ENCODE measurements at regions of chr11 and their contacts with region 1.

Region 1: GRCh38 chr11:46529095-46529905 is 64.5 kb downstream of the AMBRA1 start:
- DNase-seq: peak; percentile 55
- ATAC-seq: peak; percentile 97
- H3K4me3 ChIP-seq: no peak overlapping the region
- H3K27ac ChIP-seq: no peak overlapping the region
- H3K4me1 ChIP-seq: no peaks in the 10 kb centered on the region
- H3K27me3 ChIP-seq: no peaks in the 10 kb centered on the region
- CTCF ChIP-seq: peak; percentile 88
- POLR2A ChIP-seq: no peak
- RAD21 ChIP-seq: peak; percentile 75

Region 2: GRCh38 chr11:46389450-46390253 is 139.6 kb before region 1 on chr11:
- CTCF ChIA-PET with region 1: interaction called, 12 read pairs
- POLR2A ChIA-PET with region 1: no interaction called
- dilution Hi-C with region 1: no loop called
- in situ Hi-C with region 1: no loop called
- intact Hi-C with region 1: loop called (anchors 1 kb)
- DNase-seq: peak; percentile 46
- ATAC-seq: peak; percentile 69
- H3K4me3 ChIP-seq: peak overlapping the region; percentile 45
- H3K27ac ChIP-seq: no peak overlapping the region
- H3K4me1 ChIP-seq: peaks cover 8% of the 10 kb centered on the region; the same call in 1 of the 2 replicates
- H3K27me3 ChIP-seq: peaks cover 33% of the 10 kb centered on the region
- CTCF ChIP-seq: peak; percentile 91
- POLR2A ChIP-seq: no peak
- RAD21 ChIP-seq: peak; percentile 82

Region 3: GRCh38 chr11:46397526-46397925 is 131.8 kb before region 1 on chr11:
- CTCF ChIA-PET with region 1: interaction called, 7 read pairs
- POLR2A ChIA-PET with region 1: no interaction called
- dilution Hi-C with region 1: no loop called
- in situ Hi-C with region 1: loop called (anchors 5 kb)
- intact Hi-C with region 1: no loop called
- DNase-seq: no peak
- ATAC-seq: no peak
- H3K4me3 ChIP-seq: no peak overlapping the region
- H3K27ac ChIP-seq: no peak overlapping the region
- H3K4me1 ChIP-seq: no peaks in the 10 kb centered on the region
- H3K27me3 ChIP-seq: no peaks in the 10 kb centered on the region
- CTCF ChIP-seq: no peak
- POLR2A ChIP-seq: no peak
- RAD21 ChIP-seq: no peak

Region 4: DNA sequence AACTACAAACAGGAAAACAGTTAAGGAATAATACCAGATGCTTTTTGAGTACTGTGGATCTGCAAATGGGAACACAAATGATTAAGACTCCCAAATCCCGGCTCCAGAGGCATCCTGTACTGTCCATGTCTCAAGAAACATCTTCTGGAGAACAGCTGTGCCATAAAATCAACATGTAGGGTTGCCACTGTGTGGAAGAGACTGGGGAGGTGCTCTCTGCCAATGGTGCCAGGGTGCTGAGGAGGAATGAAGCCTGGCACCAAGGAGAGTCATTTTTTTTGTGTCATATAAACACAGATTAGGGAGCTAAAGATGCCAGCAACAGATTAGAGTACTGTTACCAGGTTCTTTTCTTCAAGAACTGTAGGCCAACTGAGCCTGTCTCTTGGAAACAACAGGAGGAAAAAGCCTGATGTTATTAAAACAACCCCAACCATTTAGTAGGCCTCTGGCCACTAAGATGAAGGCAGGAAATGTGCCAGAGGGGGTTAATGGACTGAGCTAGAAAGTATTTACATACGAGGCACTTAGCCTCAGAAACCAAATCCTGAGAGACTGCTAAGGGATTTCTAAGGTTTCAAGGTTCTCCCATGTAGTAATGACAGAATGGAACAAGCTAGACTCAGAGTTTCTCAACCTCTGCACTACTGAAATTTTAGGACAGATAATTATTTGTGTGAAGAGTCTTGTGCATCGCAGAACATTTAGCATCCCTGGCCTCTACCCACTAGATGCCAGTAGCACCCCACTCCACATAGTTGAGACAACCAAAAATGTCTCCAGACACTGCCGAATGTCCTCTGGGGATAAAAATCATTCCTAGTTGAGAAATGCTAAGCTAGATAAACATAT is 83.2 kb before region 1 on chr11:
- CTCF ChIA-PET with region 1: interaction called, 6 read pairs
- POLR2A ChIA-PET with region 1: no interaction called
- dilution Hi-C with region 1: no loop called
- in situ Hi-C with region 1: no loop called
- intact Hi-C with region 1: loop called (anchors 1 kb)
- DNase-seq: peak; percentile 52
- ATAC-seq: peak; percentile 72
- H3K4me3 ChIP-seq: no peak overlapping the region
- H3K27ac ChIP-seq: no peak overlapping the region
- H3K4me1 ChIP-seq: peaks cover 12% of the 10 kb centered on the region
- H3K27me3 ChIP-seq: no peaks in the 10 kb centered on the region
- CTCF ChIP-seq: peak; percentile 43
- POLR2A ChIP-seq: no peak
- RAD21 ChIP-seq: peak; percentile 49

Region 5: GRCh38 chr11:46489661-46490560 is 39.4 kb before region 1 on chr11:
- CTCF ChIA-PET with region 1: interaction called, 4 read pairs
- POLR2A ChIA-PET with region 1: no interaction called
- dilution Hi-C with region 1: no loop called
- in situ Hi-C with region 1: no loop called
- intact Hi-C with region 1: loop called (anchors 2 kb)
- DNase-seq: peak; percentile 69
- ATAC-seq: peak; percentile 73
- H3K4me3 ChIP-seq: no peak overlapping the region
- H3K27ac ChIP-seq: no peak overlapping the region
- H3K4me1 ChIP-seq: peaks cover 5% of the 10 kb centered on the region
- H3K27me3 ChIP-seq: no peaks in the 10 kb centered on the region
- CTCF ChIP-seq: peak; percentile 61
- POLR2A ChIP-seq: no peak
- RAD21 ChIP-seq: peak; percentile 56

Measured in IMR-90 (cell line).